ENCODE measurements at regions of chr1 and their contacts with region 1.

Region 1: DNA sequence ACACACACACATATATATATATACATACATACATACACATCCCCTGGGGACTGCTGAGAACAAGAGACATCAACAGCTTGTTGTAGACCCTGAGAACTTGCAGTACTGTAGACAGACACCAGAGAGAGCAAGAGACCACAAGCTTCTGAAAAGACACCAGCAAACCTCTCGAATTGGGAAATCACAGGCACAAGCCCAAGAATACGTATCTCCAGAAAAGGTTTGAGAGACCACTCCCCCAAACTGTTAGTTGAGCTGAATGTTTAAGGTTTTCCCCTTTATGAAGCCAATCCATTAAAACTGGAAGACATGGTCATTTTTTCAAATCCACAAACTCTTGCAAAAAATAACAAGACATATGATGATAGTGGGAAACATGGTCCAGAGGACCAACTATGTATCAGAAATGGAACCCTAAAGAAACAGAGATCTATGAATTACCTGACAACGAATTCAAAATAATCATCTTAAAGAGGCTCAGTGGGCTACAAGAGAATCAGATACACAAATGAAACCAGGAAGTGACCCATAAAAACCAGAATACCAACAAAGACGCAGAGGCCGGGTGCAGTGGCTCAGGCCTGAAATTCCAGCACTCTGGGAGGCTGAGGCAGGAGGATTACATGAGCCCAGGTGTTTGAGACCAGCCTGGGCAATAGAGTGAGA is 45.1 kb downstream of the SLC2A1 start:
- DNase-seq: peak in 3 of 5 donors; percentile 66 to 85 (median 80)
- H3K4me3 ChIP-seq: no peak overlapping the region
- H3K27ac ChIP-seq: no peak overlapping the region
- H3K4me1 ChIP-seq: no peaks in the 10 kb centered on the region
- H3K27me3 ChIP-seq: no peaks in the 10 kb centered on the region
- CTCF ChIP-seq: peak; percentile 85

Region 2: DNA sequence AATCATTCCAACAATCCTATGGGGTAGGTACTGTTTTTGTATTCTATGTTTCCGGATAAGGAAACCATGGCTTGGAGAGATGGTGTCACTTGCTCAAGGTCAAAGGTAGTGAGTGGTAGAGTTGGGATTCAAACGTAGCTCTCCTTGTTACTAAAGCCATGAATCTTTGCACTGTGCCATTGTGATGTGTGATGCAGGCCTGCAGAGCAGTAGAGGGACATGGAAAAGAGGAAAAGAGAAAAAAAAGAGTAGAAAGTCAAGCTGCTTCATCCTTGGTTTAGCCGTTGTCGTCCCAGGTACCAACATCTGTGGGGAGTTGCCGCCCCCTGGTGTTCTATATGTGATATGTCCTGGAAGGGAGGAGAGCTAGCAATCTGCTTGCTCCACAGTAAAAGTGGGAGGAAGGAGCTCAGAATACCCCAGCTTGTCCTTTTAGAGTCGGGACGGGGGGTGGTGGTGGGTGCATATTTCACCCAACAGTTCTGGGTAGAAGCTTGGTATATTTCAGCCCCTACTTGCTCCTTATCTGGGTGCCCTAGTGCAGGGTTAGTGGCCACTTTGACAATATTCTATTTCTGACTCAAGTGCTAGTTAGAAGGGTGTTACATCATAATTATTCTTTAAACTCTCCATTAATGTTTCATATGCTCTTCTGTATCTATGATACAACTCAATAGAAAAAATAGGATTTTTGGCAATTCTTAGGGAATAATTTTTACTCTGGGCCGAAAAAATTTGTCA is 160.1 kb after region 1 on chr1:
- intact Hi-C with region 1: loop called (anchors 5 kb)
- DNase-seq: peak; percentile 70 to 92 (median 83)
- H3K4me3 ChIP-seq: no peak overlapping the region
- H3K27ac ChIP-seq: no peak overlapping the region
- H3K4me1 ChIP-seq: peaks cover 0 to 3% (median 2%) of the 10 kb centered on the region in 3 donors
- H3K27me3 ChIP-seq: no peaks in the 10 kb centered on the region
- CTCF ChIP-seq: peak; percentile 87